ENCODE measurements at regions of chr4 and their contacts with region 1.

Region 1: GRCh38 chr4:78022517-78022916 is 34.6 kb upstream of the FRAS1 start:
- DNase-seq: no peak
- H3K4me3 ChIP-seq: no peak overlapping the region
- H3K27ac ChIP-seq: no peak overlapping the region
- H3K4me1 ChIP-seq: no peaks in the 10 kb centered on the region
- H3K27me3 ChIP-seq: no peaks in the 10 kb centered on the region
- CTCF ChIP-seq: no peak
- EP300 ChIP-seq: no peak
- POLR2A ChIP-seq: no peak

Region 2: GRCh38 chr4:79042079-79042674 is 1019.7 kb after region 1 on chr4:
- in situ Hi-C with region 1: no loop called
- intact Hi-C with region 1: loop called (anchors 5 kb)
- DNase-seq: no peak
- H3K4me3 ChIP-seq: no peak overlapping the region
- H3K27ac ChIP-seq: no peak overlapping the region
- H3K4me1 ChIP-seq: peaks cover 0 to 12% (median 2%) of the 10 kb centered on the region in 4 donors
- H3K27me3 ChIP-seq: no peaks in the 10 kb centered on the region
- CTCF ChIP-seq: peak; percentile 53 to 62 (median 55)
- EP300 ChIP-seq: no peak
- POLR2A ChIP-seq: no peak

Measured in transverse colon (tissue), 4 donors.